ENCODE measurements at regions of chr2 and their contacts with region 1.

Region 1: GRCh38 chr2:37877457-37878315 is 47.4 kb upstream of the RMDN2 start:
- DNase-seq: peak; percentile 31 to 38
- H3K4me3 ChIP-seq: no peak overlapping the region
- H3K27ac ChIP-seq: no peak overlapping the region
- H3K4me1 ChIP-seq: no peaks in the 10 kb centered on the region
- H3K27me3 ChIP-seq: no peaks in the 10 kb centered on the region
- CTCF ChIP-seq: peak; percentile 93

Region 2: GRCh38 chr2:37168217-37168981 is 709.3 kb before region 1 on chr2:
- CTCF ChIA-PET with region 1: no interaction called
- POLR2A ChIA-PET with region 1: no interaction called
- intact Hi-C with region 1: loop called (anchors 10 kb)
- DNase-seq: peak in 1 of 2 experiments; percentile 38
- H3K4me3 ChIP-seq: no peak overlapping the region
- H3K27ac ChIP-seq: no peak overlapping the region
- H3K4me1 ChIP-seq: peaks cover 11% of the 10 kb centered on the region
- H3K27me3 ChIP-seq: no peaks in the 10 kb centered on the region
- CTCF ChIP-seq: peak; percentile 83

Region 3: DNA sequence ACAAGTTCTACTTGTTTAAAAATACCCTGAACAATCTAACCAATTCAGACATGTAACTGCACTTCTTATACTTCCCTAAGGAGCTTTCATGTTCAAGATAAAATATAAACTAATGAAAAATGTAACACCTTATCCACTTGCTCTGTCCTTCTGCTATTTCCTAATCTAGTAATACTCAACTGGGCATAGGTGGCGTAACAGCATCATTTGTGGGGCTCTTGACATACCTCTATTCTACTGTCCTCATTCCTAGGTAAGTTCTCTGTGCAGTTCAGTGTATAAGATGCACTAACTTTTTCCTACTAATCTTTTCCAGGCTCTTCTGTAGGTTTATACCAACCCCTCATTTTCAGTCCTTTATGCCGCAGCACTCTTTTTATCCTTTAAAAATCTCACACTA is 589.7 kb before region 1 on chr2:
- CTCF ChIA-PET with region 1: no interaction called
- POLR2A ChIA-PET with region 1: no interaction called
- intact Hi-C with region 1: loop called (anchors 10 kb)
- DNase-seq: no peak
- H3K4me3 ChIP-seq: no peak overlapping the region
- H3K27ac ChIP-seq: no peak overlapping the region
- H3K4me1 ChIP-seq: no peaks in the 10 kb centered on the region
- H3K27me3 ChIP-seq: no peaks in the 10 kb centered on the region
- CTCF ChIP-seq: peak; percentile 45; the same call in 1 of the 2 replicates

Region 4: GRCh38 chr2:37378411-37378810 is 499.3 kb before region 1 on chr2:
- CTCF ChIA-PET with region 1: no interaction called
- POLR2A ChIA-PET with region 1: interaction called, 12 read pairs
- intact Hi-C with region 1: no loop called
- DNase-seq: peak; percentile 71 to 72
- H3K4me3 ChIP-seq: no peak overlapping the region
- H3K27ac ChIP-seq: no peak overlapping the region
- H3K4me1 ChIP-seq: peaks cover 11% of the 10 kb centered on the region; the same call in 1 of the 2 replicates
- H3K27me3 ChIP-seq: no peaks in the 10 kb centered on the region
- CTCF ChIP-seq: no peak

Region 5: GRCh38 chr2:37389989-37390765 is 487.5 kb before region 1 on chr2:
- CTCF ChIA-PET with region 1: interaction called, 26 read pairs
- POLR2A ChIA-PET with region 1: no interaction called
- intact Hi-C with region 1: no loop called
- DNase-seq: peak; percentile 44 to 91
- H3K4me3 ChIP-seq: no peak overlapping the region
- H3K27ac ChIP-seq: peak overlapping the region; percentile 63
- H3K4me1 ChIP-seq: peaks cover 36% of the 10 kb centered on the region
- H3K27me3 ChIP-seq: no peaks in the 10 kb centered on the region
- CTCF ChIP-seq: no peak

Region 6: GRCh38 chr2:37414470-37414949 is 463.2 kb before region 1 on chr2:
- CTCF ChIA-PET with region 1: interaction called, 46 read pairs
- POLR2A ChIA-PET with region 1: no interaction called
- intact Hi-C with region 1: loop called (anchors 1 kb)
- DNase-seq: peak; percentile 5 to 65
- H3K4me3 ChIP-seq: no peak overlapping the region
- H3K27ac ChIP-seq: no peak overlapping the region
- H3K4me1 ChIP-seq: no peaks in the 10 kb centered on the region
- H3K27me3 ChIP-seq: no peaks in the 10 kb centered on the region
- CTCF ChIP-seq: peak; percentile 94

Region 7: GRCh38 chr2:37982147-37982582 is 104.5 kb after region 1 on chr2:
- CTCF ChIA-PET with region 1: interaction called, 12 read pairs
- POLR2A ChIA-PET with region 1: no interaction called
- intact Hi-C with region 1: no loop called
- DNase-seq: peak; percentile 48 to 61
- H3K4me3 ChIP-seq: no peak overlapping the region
- H3K27ac ChIP-seq: no peak overlapping the region
- H3K4me1 ChIP-seq: peaks cover 12% of the 10 kb centered on the region
- H3K27me3 ChIP-seq: no peaks in the 10 kb centered on the region
- CTCF ChIP-seq: peak; percentile 96